ENCODE measurements at regions of chr20 and their contacts with region 1.

Region 1: DNA sequence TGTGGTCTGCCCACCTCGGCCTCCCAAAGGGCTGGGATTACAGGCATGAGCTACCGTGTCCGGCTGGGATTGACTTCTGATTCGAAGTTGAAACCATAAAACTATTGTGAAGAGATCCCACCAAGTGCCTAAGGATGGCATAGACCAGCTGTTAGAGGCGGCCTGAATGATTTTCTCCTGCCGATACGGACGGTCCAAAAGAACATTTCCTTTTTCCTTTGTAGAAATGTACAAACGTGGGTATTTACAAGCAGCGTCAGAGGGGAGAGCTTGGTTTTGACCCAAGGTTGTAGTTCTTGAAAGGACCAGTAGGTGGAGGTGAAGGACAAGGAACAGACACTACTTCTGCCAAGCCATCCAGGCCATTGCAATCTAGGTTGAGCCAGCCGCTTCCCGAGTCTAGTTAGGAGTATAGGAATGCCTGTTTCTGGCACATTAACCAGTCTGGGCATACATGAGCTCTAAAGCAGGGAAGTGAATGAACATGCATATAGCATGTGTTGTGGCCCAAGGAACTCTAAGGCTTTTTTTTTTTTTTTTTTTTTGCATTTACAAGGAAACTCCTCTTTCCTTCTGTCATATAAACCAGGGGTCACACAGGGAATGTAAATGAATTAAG is 29.1 kb downstream of the MOCS3 start:
- DNase-seq: peak; percentile 75
- CTCF ChIP-seq: peak; percentile 75

Region 2: GRCh38 chr20:51306503-51307358 is 319.0 kb after region 1 on chr20:
- in situ Hi-C with region 1: loop called (anchors 10 kb)
- DNase-seq: peak; percentile 90
- CTCF ChIP-seq: peak; percentile 94

Region 3: GRCh38 chr20:51624157-51624731 is 636.5 kb after region 1 on chr20:
- in situ Hi-C with region 1: loop called (anchors 25 kb)
- DNase-seq: peak; percentile 88
- CTCF ChIP-seq: peak; percentile 61

Measured in GM13976 (cell line).